ENCODE measurements at regions of chr14 and their contacts with region 1.

Region 1: DNA sequence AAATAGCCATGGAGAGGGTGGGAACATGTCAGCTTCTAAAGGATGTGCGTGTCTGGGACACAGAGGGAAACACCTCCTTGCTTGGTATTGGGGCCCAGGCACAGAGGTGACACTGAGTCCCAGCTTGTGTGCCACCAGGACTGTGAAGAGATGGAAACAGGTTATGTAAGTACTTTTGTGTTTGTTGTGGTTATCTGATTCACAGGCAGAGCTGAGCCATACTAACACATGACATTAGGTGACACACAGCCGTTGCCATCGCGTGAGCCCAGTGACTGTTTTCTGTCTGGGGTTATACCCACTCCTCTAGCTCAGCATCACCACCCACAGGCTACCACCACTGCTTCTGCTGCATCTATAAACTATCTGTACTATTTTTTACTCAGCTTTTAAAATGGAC is 12.1 kb upstream of the FLVCR2 start:
- DNase-seq: peak; percentile 96
- H3K4me3 Mint-ChIP-seq: peak overlapping the region; percentile 63
- H3K27ac Mint-ChIP-seq: peak overlapping the region; percentile 85
- H3K4me1 Mint-ChIP-seq: peaks cover 77% of the 10 kb centered on the region
- H3K27me3 Mint-ChIP-seq: no peaks in the 10 kb centered on the region

Region 2: GRCh38 chr14:75333606-75334548 is 232.4 kb before region 1 on chr14:
- CTCF ChIA-PET with region 1: interaction called, 4 read pairs
- intact Hi-C with region 1: loop called (anchors 1 kb)
- DNase-seq: peak; percentile 74
- H3K4me3 Mint-ChIP-seq: peak overlapping the region; percentile 58
- H3K27ac Mint-ChIP-seq: peak overlapping the region; percentile 80
- H3K4me1 Mint-ChIP-seq: peaks cover 26% of the 10 kb centered on the region
- H3K27me3 Mint-ChIP-seq: no peaks in the 10 kb centered on the region

Region 3: GRCh38 chr14:75487155-75487671 is 79.1 kb before region 1 on chr14:
- CTCF ChIA-PET with region 1: interaction called, 30 read pairs
- intact Hi-C with region 1: loop called (anchors 1 kb)
- DNase-seq: peak; percentile 35
- H3K4me3 Mint-ChIP-seq: no peak overlapping the region
- H3K27ac Mint-ChIP-seq: no peak overlapping the region
- H3K4me1 Mint-ChIP-seq: peaks cover 22% of the 10 kb centered on the region
- H3K27me3 Mint-ChIP-seq: peaks cover 3% of the 10 kb centered on the region

Region 4: DNA sequence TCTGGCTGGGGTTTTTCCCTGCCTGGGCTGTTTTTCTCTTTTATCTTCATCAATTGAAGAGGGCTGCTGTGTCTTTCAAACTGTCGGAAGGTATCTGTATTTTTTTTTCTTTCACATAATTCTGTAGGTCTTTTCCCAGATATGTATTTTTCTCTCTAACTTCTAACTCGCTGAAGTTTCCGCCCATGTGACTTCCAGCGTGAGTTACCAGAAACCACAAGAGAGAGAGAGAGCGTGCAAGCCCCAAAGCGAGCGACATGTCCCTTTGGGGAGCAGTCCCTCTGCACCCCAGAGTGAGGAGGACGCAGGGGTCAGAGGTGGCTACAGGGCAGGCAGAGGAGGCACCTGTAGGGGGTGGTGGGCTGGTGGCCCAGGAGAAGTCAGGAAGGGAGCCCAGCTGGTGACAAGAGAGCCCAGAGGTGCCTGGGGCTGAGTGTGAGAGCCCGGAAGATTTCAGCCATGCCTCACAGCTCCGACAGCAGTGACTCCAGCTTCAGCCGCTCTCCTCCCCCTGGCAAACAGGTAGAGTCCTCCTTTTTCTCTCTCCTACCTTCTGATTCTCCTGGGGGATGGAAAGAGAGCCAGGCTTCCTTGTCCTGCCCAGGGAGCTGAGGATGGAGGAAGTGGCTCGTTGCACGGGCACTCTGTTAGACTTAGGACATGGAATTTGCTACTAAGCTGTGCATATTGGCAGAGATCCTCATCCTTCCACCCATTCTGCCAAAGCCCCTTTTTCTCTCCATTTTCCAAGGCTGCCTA is 43.9 kb before region 1 on chr14 and contains the start of gene BATF:
- CTCF ChIA-PET with region 1: interaction called, 88 read pairs
- intact Hi-C with region 1: loop called (anchors 1 kb)
- DNase-seq: peak; percentile 91
- H3K4me3 Mint-ChIP-seq: peak within 1 kb of the TSS; percentile 99
- H3K27ac Mint-ChIP-seq: peak within 1 kb of the TSS; percentile 100
- H3K4me1 Mint-ChIP-seq: peaks cover 61% of the 10 kb centered on the region
- H3K27me3 Mint-ChIP-seq: no peaks in the 10 kb centered on the region
- total RNA-seq, gene BATF: 178 to 179 TPM

Region 5: GRCh38 chr14:75577729-75578101 is 11.4 kb after region 1 on chr14:
- CTCF ChIA-PET with region 1: interaction called, 30 read pairs
- intact Hi-C with region 1: loop called (anchors 1 kb)
- DNase-seq: peak; percentile 88
- H3K4me3 Mint-ChIP-seq: peak overlapping the region; percentile 82
- H3K27ac Mint-ChIP-seq: peak overlapping the region; percentile 78
- H3K4me1 Mint-ChIP-seq: peaks cover 22% of the 10 kb centered on the region
- H3K27me3 Mint-ChIP-seq: no peaks in the 10 kb centered on the region

Region 6: GRCh38 chr14:76154539-76155126 is 588.3 kb after region 1 on chr14:
- CTCF ChIA-PET with region 1: no interaction called
- intact Hi-C with region 1: no loop called
- DNase-seq: no peak
- H3K4me3 Mint-ChIP-seq: no peak overlapping the region
- H3K27ac Mint-ChIP-seq: no peak overlapping the region
- H3K4me1 Mint-ChIP-seq: peaks cover 69% of the 10 kb centered on the region
- H3K27me3 Mint-ChIP-seq: no peaks in the 10 kb centered on the region